Gastrocnemius medialis (tissue), 4 donors: ENCODE measurements at regions of chr14 and their contacts with region 1.

Region 1: GRCh38 chr14:30005114-30005808 is 77.6 kb upstream of the PRKD1 start:
- DNase-seq: no peak
- ATAC-seq: peak; percentile 39 to 41
- H3K4me3 ChIP-seq: no peak overlapping the region
- H3K27ac ChIP-seq: no peak overlapping the region
- H3K4me1 ChIP-seq: no peaks in the 10 kb centered on the region
- H3K27me3 ChIP-seq: no peaks in the 10 kb centered on the region
- CTCF ChIP-seq: peak in 4 of 5 experiments; percentile 55 to 65 (median 60)
- POLR2A ChIP-seq: no peak

Region 2: GRCh38 chr14:29548948-29549370 is 456.3 kb before region 1 on chr14:
- in situ Hi-C with region 1: loop called in 3 of 4 experiments (anchors 5 to 10 kb)
- intact Hi-C with region 1: no loop called
- DNase-seq: no peak
- ATAC-seq: peak in 1 of 2 donors; percentile 60
- H3K4me3 ChIP-seq: no peak overlapping the region
- H3K27ac ChIP-seq: no peak overlapping the region
- H3K4me1 ChIP-seq: no peaks in the 10 kb centered on the region
- H3K27me3 ChIP-seq: no peaks in the 10 kb centered on the region
- CTCF ChIP-seq: peak; percentile 28 to 64 (median 44)
- POLR2A ChIP-seq: no peak

Region 3: GRCh38 chr14:29558516-29558915 is 446.7 kb before region 1 on chr14:
- in situ Hi-C with region 1: loop called in 3 of 4 experiments (anchors 5 to 10 kb)
- intact Hi-C with region 1: no loop called
- DNase-seq: no peak
- ATAC-seq: no peak
- H3K4me3 ChIP-seq: no peak overlapping the region
- H3K27ac ChIP-seq: no peak overlapping the region
- H3K4me1 ChIP-seq: no peaks in the 10 kb centered on the region
- H3K27me3 ChIP-seq: no peaks in the 10 kb centered on the region
- CTCF ChIP-seq: no peak
- POLR2A ChIP-seq: no peak

Region 4: GRCh38 chr14:29569194-29569593 is 436.1 kb before region 1 on chr14:
- in situ Hi-C with region 1: loop called in 1 of 4 experiments (anchors 10 kb)
- intact Hi-C with region 1: no loop called
- DNase-seq: no peak
- ATAC-seq: no peak
- H3K4me3 ChIP-seq: no peak overlapping the region
- H3K27ac ChIP-seq: no peak overlapping the region
- H3K4me1 ChIP-seq: no peaks in the 10 kb centered on the region
- H3K27me3 ChIP-seq: no peaks in the 10 kb centered on the region
- CTCF ChIP-seq: no peak
- POLR2A ChIP-seq: no peak

Region 5: DNA sequence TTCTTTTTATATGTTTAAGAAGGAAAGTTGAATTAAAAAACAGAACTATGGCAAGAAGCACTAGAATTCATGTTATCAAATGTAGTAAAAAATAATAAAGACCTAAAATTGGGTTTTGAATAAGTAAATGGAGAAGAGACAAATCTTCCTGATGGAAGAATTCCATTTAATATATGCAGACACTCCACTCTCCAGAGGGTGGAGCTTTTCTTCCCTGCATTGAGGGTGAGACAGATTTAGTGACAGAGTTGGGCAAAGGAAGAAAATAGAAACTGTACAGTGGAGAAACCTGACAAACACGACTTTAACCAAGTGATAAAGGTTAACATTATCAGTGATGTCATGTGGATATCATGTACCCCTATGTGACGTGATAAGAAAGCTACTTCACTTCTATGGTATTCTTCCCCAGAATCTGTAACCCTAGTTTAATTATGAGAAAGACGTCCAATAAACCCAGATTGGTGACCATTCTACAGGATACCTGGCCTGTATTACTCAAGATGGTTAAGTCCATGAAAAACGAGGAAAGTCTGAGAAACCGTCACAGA is 295.2 kb before region 1 on chr14:
- in situ Hi-C with region 1: no loop called
- intact Hi-C with region 1: loop called (anchors 2 kb)
- DNase-seq: no peak
- ATAC-seq: no peak
- H3K4me3 ChIP-seq: no peak overlapping the region
- H3K27ac ChIP-seq: no peak overlapping the region
- H3K4me1 ChIP-seq: no peaks in the 10 kb centered on the region
- H3K27me3 ChIP-seq: no peaks in the 10 kb centered on the region
- CTCF ChIP-seq: no peak
- POLR2A ChIP-seq: no peak

Region 6: DNA sequence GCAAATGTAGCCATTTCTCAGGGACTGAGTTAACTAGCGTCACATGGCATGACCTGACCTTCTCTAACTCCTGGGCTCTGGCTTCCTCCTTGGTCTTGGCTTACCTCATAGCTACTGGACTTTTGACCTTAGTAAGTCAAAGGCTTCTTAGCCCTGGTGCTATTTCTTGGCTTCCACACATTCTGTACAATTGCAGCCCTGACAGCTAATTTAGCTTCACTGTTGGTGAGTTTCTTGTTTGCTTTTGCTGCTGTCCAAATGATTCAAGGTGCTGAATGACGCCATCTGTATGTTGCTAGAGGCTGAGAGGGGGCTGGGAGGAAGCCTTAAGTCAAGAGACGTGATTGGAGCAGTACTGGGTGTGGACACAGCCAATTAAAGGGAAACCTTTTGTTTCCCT is 280.3 kb before region 1 on chr14:
- in situ Hi-C with region 1: no loop called
- intact Hi-C with region 1: no loop called
- DNase-seq: no peak
- ATAC-seq: no peak
- H3K4me3 ChIP-seq: no peak overlapping the region
- H3K27ac ChIP-seq: no peak overlapping the region
- H3K4me1 ChIP-seq: peaks cover 0 to 4% of the 10 kb centered on the region in 2 donors
- H3K27me3 ChIP-seq: no peaks in the 10 kb centered on the region
- CTCF ChIP-seq: no peak
- POLR2A ChIP-seq: no peak

Region 7: DNA sequence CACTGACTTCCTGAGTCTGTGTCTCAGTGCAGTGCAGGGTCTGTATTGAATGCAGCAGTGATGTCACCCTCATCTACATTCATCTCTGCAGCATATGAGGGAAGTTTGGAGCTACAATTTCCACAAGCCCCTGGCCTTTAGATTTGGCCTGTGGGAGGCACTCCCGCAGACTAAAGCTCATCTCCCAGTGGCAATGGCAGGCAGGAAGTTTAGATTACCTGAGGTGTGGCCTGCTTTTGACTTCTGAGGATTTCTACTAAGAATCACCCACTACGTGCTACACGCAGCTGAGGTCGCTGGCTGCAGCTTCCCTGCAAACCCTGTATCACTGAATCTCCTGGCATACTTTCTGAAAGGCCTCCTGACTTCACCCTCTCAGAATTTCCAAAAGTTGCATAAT is 124.5 kb after region 1 on chr14:
- in situ Hi-C with region 1: no loop called
- intact Hi-C with region 1: no loop called
- DNase-seq: no peak
- ATAC-seq: no peak
- H3K4me3 ChIP-seq: no peak overlapping the region
- H3K27ac ChIP-seq: no peak overlapping the region
- H3K4me1 ChIP-seq: no peaks in the 10 kb centered on the region
- H3K27me3 ChIP-seq: no peaks in the 10 kb centered on the region
- CTCF ChIP-seq: no peak
- POLR2A ChIP-seq: no peak